Dorsolateral prefrontal cortex (tissue), 120 donors: ENCODE measurements at regions of chr17 and their contacts with region 1.

Region 1: DNA sequence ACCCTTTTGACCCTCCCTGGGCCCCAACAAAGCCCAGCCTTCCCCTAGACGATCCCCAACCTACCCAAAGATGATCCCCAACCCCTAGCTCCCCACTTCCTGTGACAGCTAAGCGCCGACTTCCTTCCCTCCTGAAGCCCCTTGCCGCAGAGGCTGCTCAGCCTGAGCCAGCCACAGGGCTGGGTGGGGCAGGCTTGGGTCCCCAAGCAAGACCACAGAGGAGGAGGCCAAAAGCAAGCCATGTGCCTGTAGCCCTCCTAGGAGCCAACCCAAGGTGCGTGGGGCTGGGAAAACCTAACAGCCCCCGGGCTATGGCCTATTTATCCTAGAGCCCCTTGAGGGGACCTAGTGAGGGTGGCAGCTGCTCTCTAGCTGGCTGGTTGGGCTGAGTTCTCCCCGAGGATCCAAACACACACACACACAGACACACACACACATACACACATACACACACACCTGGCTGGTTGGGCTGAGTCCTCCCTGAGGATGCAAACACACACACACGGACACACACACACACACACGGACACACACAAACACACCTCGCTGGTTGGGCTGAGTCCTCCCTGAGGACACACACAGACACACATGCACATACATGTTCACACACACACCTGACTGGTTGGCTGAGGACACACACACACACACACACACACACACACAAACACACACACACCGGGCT is 4.8 kb downstream of the ARRB2 start:
- DNase-seq: no peak
- H3K4me3 ChIP-seq: peak overlapping the region in 3 of 59 donors; percentile 3 to 25 (median 9)
- H3K27ac ChIP-seq: peak overlapping the region in 3 of 59 donors; percentile 27 to 34 (median 33)
- H3K27me3 ChIP-seq: no peaks in the 10 kb centered on the region
- CTCF ChIP-seq: no peak

Region 2: DNA sequence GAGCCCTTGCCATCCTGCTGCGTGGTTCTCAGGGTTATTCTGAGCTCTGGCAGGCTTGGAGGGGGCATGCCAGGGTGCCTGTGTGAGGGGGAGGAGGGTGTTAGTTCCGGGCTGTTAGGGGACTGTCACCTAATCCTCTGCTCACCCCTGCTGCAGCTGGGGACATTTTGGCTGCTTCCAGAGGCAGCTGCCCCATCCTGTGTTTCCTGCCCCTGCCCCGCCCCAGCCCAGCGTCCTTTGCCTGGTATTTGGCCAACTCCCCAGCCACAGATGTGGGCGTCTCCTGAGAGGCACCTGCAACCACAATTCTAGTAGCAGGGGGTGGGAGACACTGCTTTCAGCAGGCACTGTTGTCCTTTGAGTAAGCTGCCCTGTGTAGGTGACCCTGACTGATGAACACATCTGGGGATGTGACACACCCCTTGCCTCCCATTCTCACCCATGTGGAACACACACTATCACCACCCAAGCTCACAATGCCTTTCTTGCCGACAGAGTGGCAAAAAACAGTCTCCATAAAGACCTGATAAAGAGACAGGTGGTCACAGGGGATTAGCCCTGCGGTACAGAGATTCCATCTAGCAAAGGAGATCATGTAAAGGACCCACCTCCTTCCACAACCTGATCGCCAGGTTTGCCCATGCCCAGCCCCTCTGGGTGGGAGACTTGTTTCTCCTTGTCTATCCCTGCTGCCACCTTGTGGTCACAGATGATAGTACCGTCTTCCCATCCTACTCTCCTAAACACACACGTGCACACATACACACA is 188.0 kb after region 1 on chr17 and contains the start of gene CHRNE:
- intact Hi-C with region 1: loop called in 1 of 2 experiments (anchors 5 kb)
- DNase-seq: peak in 8 of 10 donors; percentile 60 to 90 (median 78)
- H3K4me3 ChIP-seq: peak within 1 kb of the TSS in 27 of 59 donors; percentile 1 to 64 (median 36)
- H3K27ac ChIP-seq: peak within 1 kb of the TSS in 57 of 59 donors; percentile 33 to 94 (median 77)
- H3K27me3 ChIP-seq: no peaks in the 10 kb centered on the region
- CTCF ChIP-seq: peak; percentile 65 to 89 (median 80)
- total RNA-seq, gene CHRNE: 0.34 to 4.3 (median 1.1) TPM in 119 of 120 experiments, not detected in the other